PC-9 (cell line): ENCODE measurements at regions of chr2 and their contacts with region 1.

Region 1: DNA sequence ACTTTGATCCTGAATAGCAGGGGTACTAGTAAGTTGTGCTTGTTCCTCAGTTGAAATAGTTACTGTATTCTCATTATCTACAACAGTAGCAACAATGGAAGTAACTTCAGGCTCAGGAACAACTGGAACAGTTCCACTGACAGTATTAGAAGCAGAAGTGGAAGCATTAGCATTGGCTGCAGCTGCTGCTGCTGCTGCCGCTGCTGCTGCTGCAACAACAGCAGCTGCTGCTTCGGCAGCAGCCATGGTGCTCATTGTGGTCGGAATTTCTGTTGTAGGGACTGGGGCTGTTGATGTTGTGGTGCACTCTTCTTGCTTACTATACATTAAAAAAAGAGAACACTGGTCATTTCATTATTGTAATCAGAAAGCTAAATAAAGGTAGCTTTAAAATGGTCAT is 40.8 kb downstream of the PRPF40A start:
- DNase-seq: no peak
- H3K4me3 ChIP-seq: no peak overlapping the region
- H3K27ac ChIP-seq: no peak overlapping the region
- H3K4me1 ChIP-seq: no peaks in the 10 kb centered on the region
- H3K27me3 ChIP-seq: no peaks in the 10 kb centered on the region
- CTCF ChIP-seq: no peak

Region 2: DNA sequence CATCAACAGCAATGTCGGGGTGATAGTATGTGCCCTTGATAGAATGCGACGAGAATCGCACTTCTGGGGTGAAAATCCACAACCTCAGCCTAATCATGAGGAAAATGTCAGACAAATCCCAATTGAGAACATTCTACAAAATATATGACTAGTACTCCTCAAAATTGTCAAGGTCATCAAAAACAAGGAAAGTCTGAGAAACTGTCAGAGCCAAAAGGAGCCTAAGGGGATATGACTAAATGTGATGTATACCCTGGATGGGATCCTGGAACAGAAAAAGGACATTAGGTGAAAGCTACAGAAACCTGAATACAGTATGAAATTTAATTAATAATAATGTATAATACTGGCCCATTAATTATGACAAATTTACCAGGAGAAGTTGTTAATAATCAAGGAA is 570.0 kb before region 1 on chr2:
- CTCF ChIA-PET with region 1: interaction called, 11 read pairs
- POLR2A ChIA-PET with region 1: no interaction called
- intact Hi-C with region 1: no loop called
- DNase-seq: no peak
- H3K4me3 ChIP-seq: no peak overlapping the region
- H3K27ac ChIP-seq: no peak overlapping the region
- H3K4me1 ChIP-seq: no peaks in the 10 kb centered on the region
- H3K27me3 ChIP-seq: no peaks in the 10 kb centered on the region
- CTCF ChIP-seq: no peak